ENCODE measurements at regions of chr20 and their contacts with region 1.

Region 1: GRCh38 chr20:57493091-57493615 is 31.8 kb downstream of the CTCFL start:
- DNase-seq: no peak
- H3K4me3 ChIP-seq: no peak overlapping the region
- CTCF ChIP-seq: no peak

Region 2: DNA sequence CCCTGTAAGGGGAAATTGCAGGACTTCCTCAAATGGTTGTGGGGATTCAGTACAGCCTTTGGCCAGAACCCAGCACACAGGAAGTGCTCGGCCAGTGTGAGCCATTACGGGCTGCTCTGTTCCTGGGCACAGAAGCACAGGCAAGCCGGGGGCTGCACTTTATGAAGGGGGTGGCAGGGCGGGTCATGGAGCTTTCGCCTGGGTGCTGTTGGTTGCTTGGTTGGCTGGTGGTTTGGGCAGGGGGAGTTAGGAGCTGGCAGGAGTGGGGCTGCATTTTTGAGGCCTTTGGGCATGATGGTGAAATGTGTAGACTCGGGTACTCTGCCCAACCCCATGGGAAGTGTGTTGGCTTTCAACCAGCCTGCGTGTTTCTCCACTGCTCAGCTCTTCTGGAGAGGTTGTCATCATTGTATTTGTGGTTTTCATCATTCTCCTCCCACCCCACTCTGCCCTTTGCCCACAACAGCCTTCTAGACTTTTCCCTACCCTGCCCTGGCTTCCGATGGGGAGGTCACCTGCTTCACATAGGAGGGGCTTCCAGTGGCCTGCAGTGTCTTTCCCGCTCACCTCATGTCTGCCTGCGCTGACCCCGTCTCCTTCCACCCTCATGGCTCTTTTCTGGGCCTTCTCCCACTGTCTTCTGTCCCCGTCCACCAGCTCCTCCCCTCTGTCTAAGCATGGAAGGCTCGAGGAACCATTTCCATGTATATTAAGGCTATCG is 118.1 kb before region 1 on chr20:
- in situ Hi-C with region 1: loop called (anchors 5 kb)
- DNase-seq: no peak
- H3K4me3 ChIP-seq: no peak overlapping the region
- CTCF ChIP-seq: no peak